Activated CD4-positive, alpha-beta memory T cell treated with anti-CD3 and anti-CD28 coated beads, Interleukin-2, amount 10 ng/mL, durations not matched to agents 7 days and 5 days (primary cell): ENCODE measurements at regions of chr11 and their contacts with region 1.

Region 1: GRCh38 chr11:34633990-34634693 is 13.2 kb downstream of the EHF start:
- DNase-seq: no peak
- H3K4me3 Mint-ChIP-seq: no peak overlapping the region
- H3K27ac Mint-ChIP-seq: peak overlapping the region; percentile 33
- H3K4me1 Mint-ChIP-seq: peaks cover 15% of the 10 kb centered on the region
- H3K27me3 Mint-ChIP-seq: peaks cover 19% of the 10 kb centered on the region

Region 2: GRCh38 chr11:34650528-34650927 is 16.4 kb after region 1 on chr11:
- CTCF ChIA-PET with region 1: interaction called, 10 read pairs
- POLR2A ChIA-PET with region 1: interaction called, 7 read pairs
- DNase-seq: peak; percentile 77
- H3K4me3 Mint-ChIP-seq: peak overlapping the region; percentile 26
- H3K27ac Mint-ChIP-seq: peak overlapping the region; percentile 37
- H3K4me1 Mint-ChIP-seq: peaks cover 20% of the 10 kb centered on the region
- H3K27me3 Mint-ChIP-seq: peaks cover 69% of the 10 kb centered on the region

Region 3: GRCh38 chr11:34749666-34750659 is 115.8 kb after region 1 on chr11:
- CTCF ChIA-PET with region 1: no interaction called
- POLR2A ChIA-PET with region 1: no interaction called
- DNase-seq: no peak
- H3K4me3 Mint-ChIP-seq: no peak overlapping the region
- H3K27ac Mint-ChIP-seq: no peak overlapping the region
- H3K4me1 Mint-ChIP-seq: no peaks in the 10 kb centered on the region
- H3K27me3 Mint-ChIP-seq: peaks cover 15% of the 10 kb centered on the region